ENCODE measurements at regions of chr7 and their contacts with region 1.

Region 1: DNA sequence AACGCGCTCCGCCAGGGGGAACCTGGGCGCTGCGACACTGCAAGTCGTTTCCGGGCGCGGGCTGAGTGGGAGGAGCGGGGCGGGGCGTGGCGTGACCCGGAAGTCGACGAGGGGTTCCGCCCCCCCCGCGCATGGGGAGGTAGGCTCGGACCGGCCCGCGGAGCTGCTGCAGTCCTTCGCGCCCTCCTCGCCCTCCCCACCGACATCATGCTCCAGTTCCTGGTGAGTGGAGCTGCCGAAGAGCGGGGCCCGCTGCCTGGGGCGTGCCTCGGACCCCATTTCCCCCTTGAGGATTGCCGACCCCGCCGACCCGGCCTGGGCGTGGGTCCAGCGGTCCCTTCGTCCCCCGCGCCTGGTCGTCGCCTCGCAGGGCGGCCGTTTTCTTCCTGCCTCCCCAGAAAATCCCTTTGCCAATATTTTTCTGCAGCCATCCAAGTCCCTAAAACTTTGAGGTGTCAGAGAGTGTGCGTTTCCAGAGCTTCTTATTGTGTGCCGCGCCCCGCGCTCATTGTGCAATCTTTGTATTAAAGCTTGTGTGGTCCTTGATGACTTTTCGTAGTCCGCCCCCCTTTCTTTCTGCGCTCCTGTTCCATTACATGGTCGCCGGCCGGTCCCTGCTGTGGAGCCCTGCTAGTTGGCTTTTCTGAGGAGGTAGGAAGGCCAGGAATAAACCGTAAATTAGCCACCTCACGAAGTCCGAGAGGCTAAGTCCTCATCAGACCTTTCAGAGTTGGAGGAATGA is at the start of gene STMP1:
- DNase-seq: peak; percentile 82 to 99 (median 96)

Region 2: DNA sequence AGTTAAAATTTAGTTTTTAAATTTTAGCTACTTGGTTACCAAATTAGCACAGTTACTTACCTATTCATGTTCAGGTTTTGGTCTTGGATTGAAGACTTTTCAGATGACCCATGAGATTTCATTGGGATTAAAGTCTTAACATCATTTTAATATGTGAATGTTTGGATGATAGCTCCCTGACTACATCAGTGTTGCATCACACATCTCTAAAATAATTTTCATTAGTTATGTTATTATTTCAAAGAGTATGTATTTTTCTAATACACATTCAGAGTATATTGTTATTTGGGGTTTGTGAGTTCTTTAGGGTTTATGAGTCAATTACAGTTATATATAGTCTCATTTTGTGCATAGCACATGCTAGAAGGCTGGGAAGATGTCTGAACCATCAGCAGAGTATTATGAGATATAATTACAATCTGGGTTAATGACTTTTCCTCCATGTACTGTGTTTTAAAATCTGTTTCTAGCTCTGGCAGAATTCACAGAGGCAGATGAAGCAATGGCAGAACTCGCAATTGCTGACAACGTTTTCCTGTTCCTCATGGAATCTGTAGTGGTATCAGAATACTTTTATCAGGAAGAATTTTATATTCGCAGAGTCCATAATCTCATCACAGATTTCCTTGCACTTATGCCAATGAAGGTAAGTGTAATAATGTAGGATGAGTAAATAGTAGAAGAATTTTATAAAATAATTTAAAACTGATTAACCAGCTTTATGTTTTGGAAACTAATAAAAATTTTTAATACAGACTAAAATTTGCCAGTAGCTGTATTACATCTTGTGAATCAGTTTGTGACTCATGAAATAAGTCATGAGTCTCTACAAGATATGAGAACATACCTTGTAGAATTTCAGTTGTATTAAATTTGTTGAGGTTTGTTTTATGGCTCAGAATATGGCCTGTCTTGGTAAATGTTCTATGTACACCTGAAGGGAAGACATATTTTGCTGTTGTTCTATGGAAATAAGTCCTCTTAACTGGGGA is 77.9 kb before region 1 on chr7:
- intact Hi-C with region 1: no loop called
- DNase-seq: no peak

Region 3: DNA sequence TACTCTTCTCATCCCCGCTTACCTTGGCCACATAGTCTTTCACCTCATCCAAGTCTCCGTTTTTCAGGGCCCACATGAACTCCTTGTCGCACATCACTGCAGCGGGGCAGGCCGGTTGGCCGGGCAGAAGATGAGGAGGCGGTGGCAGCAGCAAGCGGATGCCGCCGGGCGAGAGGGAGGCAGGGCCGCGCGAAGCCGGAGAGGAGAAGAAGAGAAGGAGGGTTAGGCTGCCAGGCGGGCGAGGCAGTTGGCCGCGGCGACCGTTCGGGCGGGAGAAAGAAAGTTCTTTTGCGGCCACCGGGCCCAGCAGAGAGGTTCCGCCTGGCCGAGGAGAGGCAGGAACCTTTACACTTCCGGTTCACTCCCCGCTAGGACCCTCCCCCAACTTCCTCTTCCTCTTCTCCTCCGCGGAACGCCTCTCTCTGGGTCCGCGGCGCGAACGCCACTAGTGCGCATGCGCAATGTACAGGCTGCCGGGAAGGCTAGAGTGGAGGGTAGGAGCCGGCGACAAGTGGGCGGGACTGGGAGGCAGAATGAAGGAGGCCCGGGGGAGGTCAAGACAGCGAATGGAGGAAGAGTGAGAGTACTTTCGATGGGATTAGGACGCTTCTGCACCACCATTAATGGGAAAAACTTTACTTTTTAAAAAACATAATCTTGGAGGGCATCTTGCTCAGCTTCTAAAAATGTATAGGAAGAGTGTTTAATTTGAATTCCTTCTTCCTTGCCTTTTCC is 314.6 kb after region 1 on chr7 and contains the start of gene MTPN:
- intact Hi-C with region 1: loop called (anchors 2 kb)
- DNase-seq: peak; percentile 92 to 99 (median 98)